Activated CD8-positive, alpha-beta T cell treated with anti-CD3 and anti-CD28 coated beads for 36 hours (primary cell): ENCODE measurements at regions of chr22 and their contacts with region 1.

Region 1: DNA sequence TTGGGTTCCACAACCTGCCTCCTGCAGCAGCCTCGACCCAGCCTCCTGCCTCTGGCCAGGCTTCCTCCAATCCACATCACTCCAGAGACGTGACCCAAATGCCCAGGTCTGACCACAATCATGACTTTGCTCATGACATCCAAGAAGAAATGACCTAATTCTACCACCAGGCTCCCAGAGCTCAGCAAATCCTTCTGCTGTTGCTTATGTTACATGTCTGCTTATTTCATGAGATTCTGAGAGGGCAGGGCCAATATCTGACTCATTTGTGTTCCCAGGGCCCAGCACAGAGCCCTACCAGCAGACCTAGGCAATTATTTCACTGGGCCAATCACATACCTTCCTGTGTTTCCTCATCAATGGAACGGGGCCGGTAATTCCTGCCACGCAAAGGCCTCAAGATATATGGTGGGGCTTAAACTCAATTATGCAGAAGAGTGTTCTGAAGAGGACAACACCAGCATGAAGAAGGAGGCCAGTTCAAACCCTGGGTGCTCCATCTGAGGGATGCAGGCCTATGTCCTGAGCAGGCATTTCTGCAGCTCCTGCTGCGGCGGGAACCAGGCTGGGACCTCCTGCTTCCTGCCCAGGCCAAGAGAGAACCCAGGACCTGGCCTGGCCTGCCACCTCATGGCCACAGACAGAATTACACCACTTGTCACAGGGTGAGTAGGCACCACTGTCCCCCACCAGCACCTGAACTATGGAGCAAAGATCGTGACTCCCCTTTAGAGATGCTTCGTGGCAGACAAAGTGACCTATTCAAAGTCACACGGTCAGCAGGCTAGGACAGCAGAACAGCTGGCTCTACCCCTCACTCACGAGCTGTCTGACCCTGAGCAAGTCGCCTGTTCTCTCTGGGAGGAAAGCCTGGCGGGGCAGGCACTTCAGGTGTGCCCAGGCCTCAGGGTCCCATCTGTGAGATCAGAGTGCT is 5.9 kb downstream of the CENPM start:
- DNase-seq: peak; percentile 91
- ATAC-seq: peak; percentile 75
- H3K4me3 Mint-ChIP-seq: peak overlapping the region; percentile 74
- H3K27ac Mint-ChIP-seq: peak overlapping the region; percentile 100
- H3K4me1 Mint-ChIP-seq: peaks cover 58% of the 10 kb centered on the region
- H3K27me3 Mint-ChIP-seq: no peaks in the 10 kb centered on the region
- CTCF ChIP-seq: peak; percentile 94

Region 2: GRCh38 chr22:41780746-41781505 is 160.2 kb before region 1 on chr22:
- CTCF ChIA-PET with region 1: interaction called, 12 read pairs
- POLR2A ChIA-PET with region 1: interaction called, 5 read pairs
- intact Hi-C with region 1: no loop called
- DNase-seq: peak; percentile 98
- ATAC-seq: peak; percentile 94
- H3K4me3 Mint-ChIP-seq: peak overlapping the region; percentile 81
- H3K27ac Mint-ChIP-seq: peak overlapping the region; percentile 99
- H3K4me1 Mint-ChIP-seq: peaks cover 39% of the 10 kb centered on the region
- H3K27me3 Mint-ChIP-seq: no peaks in the 10 kb centered on the region
- CTCF ChIP-seq: no peak

Region 3: GRCh38 chr22:41822317-41823060 is 118.6 kb before region 1 on chr22:
- CTCF ChIA-PET with region 1: interaction called, 12 read pairs
- POLR2A ChIA-PET with region 1: interaction called, 10 read pairs
- intact Hi-C with region 1: loop called (anchors 5 kb)
- DNase-seq: peak; percentile 65
- ATAC-seq: peak; percentile 99
- H3K4me3 Mint-ChIP-seq: no peak overlapping the region
- H3K27ac Mint-ChIP-seq: peak overlapping the region; percentile 84
- H3K4me1 Mint-ChIP-seq: peaks cover 29% of the 10 kb centered on the region
- H3K27me3 Mint-ChIP-seq: no peaks in the 10 kb centered on the region
- CTCF ChIP-seq: peak; percentile 73

Region 4: GRCh38 chr22:41841085-41841659 is 99.9 kb before region 1 on chr22:
- CTCF ChIA-PET with region 1: interaction called, 13 read pairs
- POLR2A ChIA-PET with region 1: interaction called, 4 read pairs
- intact Hi-C with region 1: no loop called
- DNase-seq: no peak
- ATAC-seq: no peak
- H3K4me3 Mint-ChIP-seq: no peak overlapping the region
- H3K27ac Mint-ChIP-seq: no peak overlapping the region
- H3K4me1 Mint-ChIP-seq: peaks cover 70% of the 10 kb centered on the region
- H3K27me3 Mint-ChIP-seq: no peaks in the 10 kb centered on the region
- CTCF ChIP-seq: no peak

Region 5: DNA sequence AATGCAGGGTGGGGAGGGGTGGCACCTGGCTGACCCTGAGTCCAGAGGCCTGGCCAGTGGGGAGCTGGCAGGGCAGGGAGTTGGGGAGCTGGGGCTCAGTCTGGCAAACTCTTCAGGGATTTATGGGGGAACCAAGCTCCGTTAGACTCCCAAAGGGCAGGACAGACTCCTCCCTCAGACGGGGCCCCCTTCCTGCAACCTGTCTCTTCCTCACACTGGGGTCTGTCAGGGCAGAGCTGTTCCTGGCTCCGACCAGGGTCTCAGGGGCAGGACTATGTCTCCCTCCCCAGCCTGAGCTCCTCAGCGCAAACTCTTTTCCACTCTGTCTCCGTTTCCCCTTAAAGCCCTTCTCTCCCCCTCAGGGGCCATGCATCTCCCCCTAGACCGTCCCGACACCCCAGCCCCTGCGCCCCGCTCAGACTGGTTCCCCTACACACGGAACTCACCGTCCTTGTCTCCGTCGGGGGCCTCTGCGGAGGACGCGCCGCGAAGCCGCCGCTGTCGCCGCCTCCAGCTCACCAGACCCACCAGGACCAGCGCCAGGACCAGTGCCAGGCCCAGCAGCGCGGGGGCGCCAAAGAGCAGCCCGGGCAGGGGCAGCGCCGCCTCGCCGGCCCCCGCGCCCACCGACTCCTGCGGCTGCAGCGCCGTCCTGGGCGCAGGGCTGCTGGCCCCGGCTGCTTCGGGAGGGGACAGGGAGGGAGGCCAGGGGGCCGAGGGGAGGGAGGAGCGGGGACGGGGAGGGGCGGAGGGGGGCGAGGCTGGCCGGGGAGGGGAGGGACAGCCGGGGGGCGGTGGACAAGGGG is 15.2 kb before region 1 on chr22:
- CTCF ChIA-PET with region 1: interaction called, 62 read pairs
- POLR2A ChIA-PET with region 1: interaction called, 134 read pairs
- intact Hi-C with region 1: no loop called
- DNase-seq: peak; percentile 86
- ATAC-seq: peak; percentile 89
- H3K4me3 Mint-ChIP-seq: peak overlapping the region; percentile 64
- H3K27ac Mint-ChIP-seq: no peak overlapping the region
- H3K4me1 Mint-ChIP-seq: peaks cover 27% of the 10 kb centered on the region
- H3K27me3 Mint-ChIP-seq: peaks cover 2% of the 10 kb centered on the region
- CTCF ChIP-seq: peak; percentile 83

Region 6: GRCh38 chr22:41989251-41989650 is 48.2 kb after region 1 on chr22:
- CTCF ChIA-PET with region 1: no interaction called
- POLR2A ChIA-PET with region 1: no interaction called
- intact Hi-C with region 1: no loop called
- DNase-seq: no peak
- ATAC-seq: no peak
- H3K4me3 Mint-ChIP-seq: no peak overlapping the region
- H3K27ac Mint-ChIP-seq: no peak overlapping the region
- H3K4me1 Mint-ChIP-seq: no peaks in the 10 kb centered on the region
- H3K27me3 Mint-ChIP-seq: peaks cover 2% of the 10 kb centered on the region
- CTCF ChIP-seq: no peak